ENCODE measurements at regions of chr7 and their contacts with region 1.

Region 1: GRCh38 chr7:97835296-97836138 is 36.7 kb downstream of the ASNS start:
- DNase-seq: peak; percentile 37 to 81 (median 44)
- ATAC-seq: peak; percentile 98
- H3K4me3 ChIP-seq: no peak overlapping the region
- H3K27ac ChIP-seq: no peak overlapping the region
- H3K4me1 ChIP-seq: no peaks in the 10 kb centered on the region
- H3K27me3 ChIP-seq: peaks cover 11 to 13% of the 10 kb centered on the region in 2 experiments
- CTCF ChIP-seq: peak; percentile 70 to 82 (median 78)
- EP300 ChIP-seq: no peak
- POLR2A ChIP-seq: no peak
- RAD21 ChIP-seq: peak; percentile 81 to 89

Region 2: DNA sequence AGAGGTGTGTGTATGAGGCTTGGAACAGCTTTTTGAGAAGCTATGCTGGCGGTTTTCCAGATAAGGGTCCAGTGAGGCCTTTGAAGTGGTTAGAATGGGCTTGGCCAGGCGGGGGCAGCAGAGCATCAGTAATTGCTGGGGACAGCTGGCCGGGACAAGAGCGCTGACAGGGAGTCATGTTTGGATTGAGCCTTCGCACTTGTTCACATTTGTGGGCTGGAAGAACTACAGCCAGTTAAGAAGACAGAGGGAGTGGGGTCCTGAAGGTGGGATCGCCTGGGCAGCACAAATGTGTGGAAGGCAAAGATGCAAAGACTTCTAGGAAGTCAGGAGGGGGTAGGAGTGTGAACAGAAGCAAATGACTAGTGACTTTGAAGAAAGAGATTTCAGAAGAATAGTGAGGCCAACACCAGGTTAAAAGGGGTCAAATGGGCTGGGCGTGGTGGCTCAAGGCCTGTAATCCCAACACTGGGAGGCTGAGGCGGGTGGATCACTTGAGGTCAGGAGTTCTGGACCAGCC is 730.7 kb before region 1 on chr7:
- CTCF ChIA-PET with region 1: interaction called, 17 read pairs
- POLR2A ChIA-PET with region 1: no interaction called
- in situ Hi-C with region 1: loop called (anchors 5 kb)
- intact Hi-C with region 1: loop called (anchors 1 kb)
- DNase-seq: peak; percentile 79 to 92 (median 82)
- ATAC-seq: peak; percentile 100
- H3K4me3 ChIP-seq: no peak overlapping the region
- H3K27ac ChIP-seq: no peak overlapping the region
- H3K4me1 ChIP-seq: no peaks in the 10 kb centered on the region; a peak in 1 of 5 replicates
- H3K27me3 ChIP-seq: no peaks in the 10 kb centered on the region; a peak in 1 of 5 replicates
- CTCF ChIP-seq: peak; percentile 93 to 97 (median 94)
- EP300 ChIP-seq: no peak
- POLR2A ChIP-seq: no peak
- RAD21 ChIP-seq: peak; percentile 98

Region 3: DNA sequence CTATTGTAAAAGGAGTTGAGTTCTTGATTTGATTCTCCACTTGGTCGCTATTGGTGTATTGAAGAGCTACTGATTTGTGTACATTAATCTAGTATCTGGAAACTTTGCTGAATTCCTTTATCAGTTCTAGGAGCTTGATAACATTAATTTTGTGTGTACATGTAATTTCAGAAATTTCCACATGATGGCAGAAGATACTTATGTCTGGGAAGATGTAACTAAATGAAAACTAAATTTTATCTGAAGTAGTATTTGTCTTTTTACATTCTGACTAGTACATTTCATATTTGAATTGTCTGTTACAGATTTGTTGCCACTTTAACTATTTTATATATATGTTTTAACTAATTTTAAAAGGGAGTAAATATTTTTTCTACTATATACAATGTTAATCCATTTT is 690.4 kb before region 1 on chr7:
- CTCF ChIA-PET with region 1: interaction called, 13 read pairs
- POLR2A ChIA-PET with region 1: no interaction called
- in situ Hi-C with region 1: no loop called
- intact Hi-C with region 1: loop called (anchors 2 kb)
- DNase-seq: peak in 1 of 4 experiments; percentile 36
- ATAC-seq: peak; percentile 65; the same call in 2 of the 3 replicates
- H3K4me3 ChIP-seq: no peak overlapping the region
- H3K27ac ChIP-seq: no peak overlapping the region
- H3K4me1 ChIP-seq: no peaks in the 10 kb centered on the region
- H3K27me3 ChIP-seq: no peaks in the 10 kb centered on the region
- CTCF ChIP-seq: peak in 2 of 3 experiments; percentile 28 to 70; a peak in 3 of 6 replicates
- EP300 ChIP-seq: no peak
- POLR2A ChIP-seq: no peak
- RAD21 ChIP-seq: peak; percentile 64 to 78

Region 4: GRCh38 chr7:97499204-97499603 is 336.3 kb before region 1 on chr7:
- CTCF ChIA-PET with region 1: interaction called, 12 read pairs
- POLR2A ChIA-PET with region 1: no interaction called
- in situ Hi-C with region 1: loop called (anchors 10 kb)
- intact Hi-C with region 1: loop called (anchors 1 kb)
- DNase-seq: peak; percentile 31 to 58 (median 44)
- ATAC-seq: peak; percentile 93
- H3K4me3 ChIP-seq: no peak overlapping the region
- H3K27ac ChIP-seq: no peak overlapping the region
- H3K4me1 ChIP-seq: no peaks in the 10 kb centered on the region
- H3K27me3 ChIP-seq: no peaks in the 10 kb centered on the region
- CTCF ChIP-seq: peak; percentile 55 to 80 (median 63)
- EP300 ChIP-seq: no peak
- POLR2A ChIP-seq: no peak
- RAD21 ChIP-seq: peak; percentile 62 to 64

Region 5: DNA sequence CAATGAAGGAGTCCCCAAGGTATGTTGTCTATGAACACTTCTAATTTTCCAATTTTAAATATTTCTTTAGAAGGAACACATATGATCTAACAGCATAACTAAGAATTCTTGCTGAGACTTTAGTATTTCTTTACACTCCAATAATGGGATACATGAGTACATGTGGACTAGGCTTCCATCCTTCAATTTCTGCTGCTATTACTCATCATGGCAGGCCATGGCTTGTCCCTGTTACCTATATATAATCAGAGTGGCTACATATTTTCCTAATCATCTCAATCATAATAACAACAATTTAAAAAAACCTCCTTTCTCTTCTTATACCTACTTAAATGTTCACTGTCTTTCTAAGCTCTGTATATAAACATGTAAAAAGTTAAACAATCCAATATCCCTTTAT is 163.9 kb before region 1 on chr7:
- CTCF ChIA-PET with region 1: no interaction called
- POLR2A ChIA-PET with region 1: no interaction called
- in situ Hi-C with region 1: no loop called
- intact Hi-C with region 1: loop called (anchors 10 kb)
- DNase-seq: no peak
- ATAC-seq: no peak
- H3K4me3 ChIP-seq: no peak overlapping the region
- H3K27ac ChIP-seq: no peak overlapping the region
- H3K4me1 ChIP-seq: no peaks in the 10 kb centered on the region
- H3K27me3 ChIP-seq: no peaks in the 10 kb centered on the region; a peak in 1 of 5 replicates
- CTCF ChIP-seq: no peak
- EP300 ChIP-seq: no peak
- POLR2A ChIP-seq: no peak
- RAD21 ChIP-seq: no peak

Region 6: DNA sequence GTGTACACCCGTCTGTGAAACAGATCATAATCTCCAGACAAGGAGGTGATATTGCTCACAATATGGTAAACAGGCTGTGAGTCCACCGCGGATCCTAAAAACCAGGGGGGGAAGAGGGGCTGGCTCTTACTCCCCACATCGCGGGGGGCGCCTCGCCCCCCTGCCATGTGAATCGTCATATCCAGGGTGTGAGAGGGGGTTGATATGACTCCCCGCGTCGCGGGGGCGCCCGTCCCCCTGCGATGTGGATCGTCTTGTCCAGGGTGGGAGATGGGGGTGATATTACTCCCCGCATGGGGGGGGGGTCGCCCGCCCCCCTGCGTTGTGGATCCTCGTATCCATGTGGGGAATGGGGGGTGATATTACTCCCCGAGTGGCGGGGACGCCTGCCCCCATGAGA is 123.5 kb after region 1 on chr7:
- CTCF ChIA-PET with region 1: no interaction called
- POLR2A ChIA-PET with region 1: no interaction called
- in situ Hi-C with region 1: no loop called
- intact Hi-C with region 1: no loop called
- DNase-seq: no peak
- ATAC-seq: no peak
- H3K4me3 ChIP-seq: no peak overlapping the region
- H3K27ac ChIP-seq: no peak overlapping the region
- H3K4me1 ChIP-seq: no peaks in the 10 kb centered on the region; a peak in 1 of 5 replicates
- H3K27me3 ChIP-seq: no peaks in the 10 kb centered on the region
- CTCF ChIP-seq: no peak
- EP300 ChIP-seq: no peak
- POLR2A ChIP-seq: no peak
- RAD21 ChIP-seq: no peak

Region 7: DNA sequence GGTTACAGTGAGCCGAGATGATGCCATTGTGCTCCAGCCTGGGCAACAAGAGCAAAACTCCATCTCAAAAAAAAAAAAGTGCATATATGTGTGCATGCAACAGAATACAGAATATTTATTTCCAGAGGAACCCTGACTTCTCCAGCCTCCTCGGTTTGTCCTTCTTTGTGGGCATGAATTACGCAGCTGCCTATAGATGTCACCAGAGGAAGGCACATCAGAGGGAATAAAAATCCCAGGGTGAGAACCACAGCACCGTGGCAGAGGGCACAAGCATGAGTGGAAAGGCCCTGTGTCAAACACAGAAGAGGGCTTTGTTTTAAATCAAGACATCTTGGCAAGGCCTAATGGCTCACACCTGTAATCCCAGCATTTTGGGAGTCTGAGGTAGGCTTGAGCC is 178.8 kb after region 1 on chr7:
- CTCF ChIA-PET with region 1: no interaction called
- POLR2A ChIA-PET with region 1: no interaction called
- in situ Hi-C with region 1: no loop called
- intact Hi-C with region 1: loop called (anchors 5 kb)
- DNase-seq: no peak
- ATAC-seq: no peak
- H3K4me3 ChIP-seq: no peak overlapping the region
- H3K27ac ChIP-seq: no peak overlapping the region
- H3K4me1 ChIP-seq: peaks cover 0 to 2% of the 10 kb centered on the region in 2 experiments; a peak in 2 of 5 replicates
- H3K27me3 ChIP-seq: peaks cover 3 to 27% of the 10 kb centered on the region in 2 experiments; a peak in 2 of 5 replicates
- CTCF ChIP-seq: no peak
- EP300 ChIP-seq: no peak
- POLR2A ChIP-seq: no peak
- RAD21 ChIP-seq: no peak

Region 8: DNA sequence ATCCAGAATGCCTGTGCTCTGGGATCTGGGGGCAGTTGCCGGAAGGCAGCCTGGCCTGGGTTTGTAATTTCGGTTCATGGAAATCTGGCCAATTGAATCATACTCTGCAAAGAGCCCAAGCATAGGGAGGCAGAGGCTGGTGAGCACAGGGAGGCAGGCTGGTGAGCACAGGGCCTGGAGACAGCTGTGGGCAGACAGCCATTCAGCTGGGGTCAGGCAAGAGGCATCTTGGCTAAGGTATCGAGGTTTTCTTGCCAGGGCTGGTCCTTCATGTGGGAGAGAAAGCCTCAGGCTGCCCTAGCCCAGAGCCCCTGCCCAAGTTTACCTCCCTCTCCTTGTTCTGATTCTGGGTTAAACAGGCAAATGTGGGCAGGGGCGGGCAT is 629.0 kb after region 1 on chr7:
- CTCF ChIA-PET with region 1: no interaction called
- POLR2A ChIA-PET with region 1: no interaction called
- in situ Hi-C with region 1: no loop called
- intact Hi-C with region 1: no loop called
- DNase-seq: no peak
- ATAC-seq: no peak
- H3K4me3 ChIP-seq: no peak overlapping the region
- H3K27ac ChIP-seq: no peak overlapping the region
- H3K4me1 ChIP-seq: no peaks in the 10 kb centered on the region
- H3K27me3 ChIP-seq: peaks cover 11 to 35% of the 10 kb centered on the region in 2 experiments; a peak in 2 of 5 replicates
- CTCF ChIP-seq: no peak
- EP300 ChIP-seq: no peak
- POLR2A ChIP-seq: no peak
- RAD21 ChIP-seq: no peak

Measured in K562 (cell line).